Sigmoid colon (tissue), 7 donors: ENCODE measurements at regions of chr17 and their contacts with region 1.

Region 1: DNA sequence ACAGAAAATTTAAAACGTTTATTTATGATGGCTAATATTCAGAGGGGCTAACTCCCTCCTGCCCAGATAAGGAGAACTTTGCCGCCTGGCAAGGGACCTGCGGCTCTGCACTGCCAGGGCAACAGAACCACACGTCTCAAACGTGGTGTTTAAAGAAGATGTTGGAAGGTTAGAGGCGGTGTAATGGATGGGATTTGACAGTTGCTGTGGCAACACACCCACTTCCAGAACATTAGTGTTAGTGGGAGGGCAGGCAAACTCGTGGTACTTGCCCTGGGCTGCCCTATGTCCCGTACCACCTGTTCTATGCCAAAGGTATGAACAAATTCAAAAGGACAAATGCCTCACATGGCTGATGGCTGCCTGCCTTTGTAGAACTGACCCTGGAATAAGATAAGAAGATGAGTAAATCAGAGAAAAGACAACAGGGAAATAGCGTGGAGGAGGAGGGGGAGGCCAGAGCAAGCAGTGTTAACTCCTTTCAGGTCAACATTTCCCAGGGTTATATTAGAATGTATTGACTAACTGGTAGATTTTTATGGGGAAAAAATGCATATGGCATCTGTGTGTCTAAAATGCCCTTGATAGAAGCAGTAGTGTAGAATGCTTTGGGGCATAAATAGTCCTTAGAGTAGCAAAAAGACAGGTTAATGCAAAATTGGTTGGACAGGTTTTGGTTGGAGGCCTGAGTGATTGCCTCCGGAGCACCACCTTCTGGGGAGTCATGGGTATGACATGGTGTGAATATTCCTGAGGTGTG is 30.8 kb downstream of the HLF start:
- DNase-seq: peak; percentile 82
- H3K4me3 ChIP-seq: no peak overlapping the region
- H3K27ac ChIP-seq: peak overlapping the region; percentile 1 to 82 (median 38)
- H3K4me1 ChIP-seq: peaks cover 0 to 32% (median 24%) of the 10 kb centered on the region in 4 donors
- H3K27me3 ChIP-seq: no peaks in the 10 kb centered on the region
- CTCF ChIP-seq: peak; percentile 77 to 88 (median 78)
- EP300 ChIP-seq: no peak
- POLR2A ChIP-seq: no peak

Region 2: GRCh38 chr17:54992797-54993639 is 302.6 kb before region 1 on chr17:
- intact Hi-C with region 1: loop called (anchors 5 kb)
- DNase-seq: no peak
- H3K4me3 ChIP-seq: no peak overlapping the region
- H3K27ac ChIP-seq: no peak overlapping the region
- H3K4me1 ChIP-seq: no peaks in the 10 kb centered on the region
- H3K27me3 ChIP-seq: no peaks in the 10 kb centered on the region
- CTCF ChIP-seq: peak in 3 of 4 experiments; percentile 47 to 67 (median 56)
- EP300 ChIP-seq: no peak
- POLR2A ChIP-seq: no peak

Region 3: GRCh38 chr17:55238179-55238930 is 57.2 kb before region 1 on chr17:
- intact Hi-C with region 1: loop called (anchors 5 kb)
- DNase-seq: peak; percentile 97
- H3K4me3 ChIP-seq: peak overlapping the region; percentile 31 to 55 (median 52)
- H3K27ac ChIP-seq: peak overlapping the region; percentile 82 to 86 (median 85)
- H3K4me1 ChIP-seq: peaks cover 0 to 22% (median 9%) of the 10 kb centered on the region in 4 donors
- H3K27me3 ChIP-seq: no peaks in the 10 kb centered on the region
- CTCF ChIP-seq: no peak
- EP300 ChIP-seq: peak in 1 of 4 donors; percentile 35
- POLR2A ChIP-seq: no peak

Region 4: GRCh38 chr17:55264645-55265298 is 30.8 kb before region 1 on chr17 and contains the start of gene HLF:
- intact Hi-C with region 1: loop called (anchors 1 kb)
- DNase-seq: peak; percentile 93
- H3K4me3 ChIP-seq: peak within 1 kb of the TSS; percentile 70 to 81 (median 74)
- H3K27ac ChIP-seq: peak within 1 kb of the TSS; percentile 88 to 97 (median 95)
- H3K4me1 ChIP-seq: peaks cover 0 to 50% (median 35%) of the 10 kb centered on the region in 4 donors
- H3K27me3 ChIP-seq: no peaks in the 10 kb centered on the region
- CTCF ChIP-seq: no peak
- EP300 ChIP-seq: no peak
- POLR2A ChIP-seq: no peak
- total RNA-seq, gene HLF: 41.7 to 54.0 (median 49.4) TPM

Region 5: DNA sequence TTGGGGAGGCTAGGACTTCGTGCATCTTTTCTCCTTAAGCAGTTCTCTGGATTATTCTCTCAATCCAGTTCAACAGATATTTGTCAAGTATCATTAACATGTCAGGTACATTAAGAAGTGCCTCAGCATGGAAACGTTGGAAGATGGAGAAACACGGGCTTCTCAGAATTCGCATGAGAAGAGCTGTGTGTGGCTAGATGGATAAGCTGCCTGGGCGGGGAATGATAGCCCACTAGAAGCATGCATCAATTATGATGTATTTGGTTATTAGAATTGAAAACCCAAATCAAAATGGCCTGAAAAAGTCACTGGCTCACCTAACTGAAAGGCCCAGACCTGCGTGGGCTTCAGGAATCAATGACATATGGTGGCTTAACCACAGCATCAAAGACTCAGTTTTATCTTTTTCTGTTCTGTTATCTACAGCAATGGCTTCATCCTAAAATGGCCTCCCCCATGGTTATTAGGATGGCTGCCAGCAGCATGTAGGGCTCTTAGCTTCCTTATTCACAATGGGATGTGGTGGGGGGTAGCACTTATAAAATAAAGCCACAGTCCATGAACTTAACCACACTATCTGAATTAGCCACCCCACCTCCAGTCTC is 82.2 kb after region 1 on chr17:
- intact Hi-C with region 1: no loop called
- DNase-seq: no peak
- H3K4me3 ChIP-seq: no peak overlapping the region
- H3K27ac ChIP-seq: no peak overlapping the region
- H3K4me1 ChIP-seq: no peaks in the 10 kb centered on the region
- H3K27me3 ChIP-seq: no peaks in the 10 kb centered on the region
- CTCF ChIP-seq: no peak
- EP300 ChIP-seq: no peak
- POLR2A ChIP-seq: no peak

Region 6: DNA sequence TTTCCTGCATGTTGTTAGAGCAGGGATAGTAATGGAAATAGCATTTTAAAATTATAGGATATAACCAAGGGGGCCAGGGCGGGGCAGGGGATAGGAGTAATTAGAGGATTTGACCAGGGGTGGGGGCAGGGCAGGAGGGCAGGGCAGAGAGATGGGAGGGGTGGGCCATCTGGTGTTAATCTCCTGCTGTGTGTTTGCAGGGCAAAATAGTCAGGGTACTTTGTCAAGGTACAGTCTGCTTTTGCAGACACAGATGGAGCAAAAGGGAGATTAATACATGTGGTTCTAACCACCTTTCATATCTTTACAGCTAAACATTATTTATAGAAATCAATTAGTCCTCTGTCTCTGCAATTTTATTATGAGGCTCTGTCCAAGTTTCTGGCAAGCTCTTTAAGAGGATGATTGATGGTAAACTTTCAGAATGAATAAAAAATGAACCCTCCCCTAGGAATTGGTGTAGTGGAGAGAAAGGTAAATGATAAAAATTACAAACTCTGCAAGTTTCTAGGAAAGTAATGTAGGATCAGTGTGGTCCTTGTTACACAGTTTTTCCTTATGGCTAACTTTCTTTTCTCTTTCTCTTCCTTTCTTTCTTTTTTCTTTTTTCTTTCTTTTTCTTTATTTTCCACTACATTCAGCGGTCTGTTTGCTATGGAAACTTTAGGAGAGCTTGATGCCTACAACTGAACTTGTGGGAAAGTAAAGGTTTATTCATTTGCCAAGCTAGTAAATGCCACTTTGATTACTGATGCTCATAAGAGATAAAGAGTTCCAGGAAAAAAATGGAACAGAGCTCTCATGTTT is 864.4 kb after region 1 on chr17:
- intact Hi-C with region 1: loop called (anchors 5 kb)
- DNase-seq: no peak
- H3K4me3 ChIP-seq: no peak overlapping the region
- H3K27ac ChIP-seq: peak overlapping the region in 2 of 4 donors; percentile 10 to 41
- H3K4me1 ChIP-seq: peaks cover 0 to 49% (median 32%) of the 10 kb centered on the region in 4 donors
- H3K27me3 ChIP-seq: no peaks in the 10 kb centered on the region
- CTCF ChIP-seq: no peak
- EP300 ChIP-seq: no peak
- POLR2A ChIP-seq: no peak